ENCODE measurements at regions of chr1 and their contacts with region 1.

Region 1: DNA sequence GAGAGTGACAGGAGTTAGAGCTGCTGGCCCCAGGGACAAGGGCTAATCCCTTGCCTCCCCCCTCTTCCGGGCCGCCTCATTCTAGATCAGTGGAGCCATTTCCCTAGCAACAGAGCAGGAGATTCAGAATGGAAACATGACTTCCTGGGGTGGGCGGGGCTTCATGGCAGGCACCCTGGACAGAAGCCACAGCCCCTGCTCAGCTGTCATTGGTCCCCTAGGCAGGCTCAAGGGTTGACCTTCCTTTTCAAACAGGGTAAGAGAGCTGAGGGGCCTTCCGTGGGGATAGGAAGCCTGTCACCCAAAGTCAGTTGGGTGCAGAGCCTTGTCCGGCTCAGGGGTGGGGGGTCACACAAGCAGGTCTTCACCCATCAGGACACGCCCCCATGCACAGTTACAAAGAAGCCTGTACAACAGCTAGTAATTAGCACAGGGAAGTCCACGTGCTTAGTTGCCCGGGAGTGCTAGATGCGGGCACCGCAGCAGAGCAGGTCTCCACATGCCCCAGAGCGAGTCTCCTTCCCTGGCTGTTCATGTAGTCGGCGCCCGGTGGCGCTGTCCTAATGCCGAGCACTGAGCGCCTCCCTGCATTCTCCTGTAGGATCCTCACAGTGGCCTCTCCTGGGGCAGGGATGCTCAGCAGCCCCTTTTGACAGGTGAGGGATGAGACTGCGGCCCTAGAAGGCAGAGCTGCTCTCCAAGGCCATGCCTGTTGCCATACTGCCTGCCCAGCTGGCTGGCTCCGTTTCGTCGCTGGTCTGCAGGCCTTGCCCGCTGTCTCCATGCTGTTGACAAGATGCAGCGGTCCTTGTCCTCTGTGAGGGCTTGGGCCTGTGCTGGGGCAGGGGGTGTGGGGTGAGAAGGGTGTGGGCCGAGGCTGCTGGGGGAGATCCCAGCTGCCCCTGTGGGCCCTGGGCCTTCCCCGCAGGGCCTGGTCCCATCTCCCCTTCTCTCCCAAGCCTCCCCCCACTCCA is 5.1 kb downstream of the TMEM201 start:
- DNase-seq: peak in 1 of 2 donors; percentile 56
- ATAC-seq: no peak
- H3K4me3 ChIP-seq: peak overlapping the region in 3 of 4 donors; percentile 2 to 19 (median 13)
- H3K27ac ChIP-seq: peak overlapping the region; percentile 77 to 84 (median 82)
- H3K4me1 ChIP-seq: peaks cover 73 to 76% of the 10 kb centered on the region in 2 donors
- H3K27me3 ChIP-seq: no peaks in the 10 kb centered on the region
- CTCF ChIP-seq: no peak
- POLR2A ChIP-seq: no peak

Region 2: GRCh38 chr1:9615316-9616063 is 21.7 kb after region 1 on chr1:
- in situ Hi-C with region 1: no loop called
- intact Hi-C with region 1: no loop called
- DNase-seq: no peak
- ATAC-seq: peak in 1 of 2 donors; percentile 45
- H3K4me3 ChIP-seq: no peak overlapping the region
- H3K27ac ChIP-seq: no peak overlapping the region
- H3K4me1 ChIP-seq: no peaks in the 10 kb centered on the region
- H3K27me3 ChIP-seq: peaks cover 5 to 16% (median 7%) of the 10 kb centered on the region in 3 donors
- CTCF ChIP-seq: peak in 3 of 5 experiments; percentile 24 to 57 (median 37)
- POLR2A ChIP-seq: no peak

Region 3: GRCh38 chr1:9671377-9672140 is 77.8 kb after region 1 on chr1:
- in situ Hi-C with region 1: no loop called
- intact Hi-C with region 1: no loop called
- DNase-seq: no peak
- ATAC-seq: no peak
- H3K4me3 ChIP-seq: no peak overlapping the region
- H3K27ac ChIP-seq: no peak overlapping the region
- H3K4me1 ChIP-seq: no peaks in the 10 kb centered on the region
- H3K27me3 ChIP-seq: peaks cover 0 to 6% (median 0%) of the 10 kb centered on the region in 3 donors
- CTCF ChIP-seq: no peak
- POLR2A ChIP-seq: no peak

Region 4: DNA sequence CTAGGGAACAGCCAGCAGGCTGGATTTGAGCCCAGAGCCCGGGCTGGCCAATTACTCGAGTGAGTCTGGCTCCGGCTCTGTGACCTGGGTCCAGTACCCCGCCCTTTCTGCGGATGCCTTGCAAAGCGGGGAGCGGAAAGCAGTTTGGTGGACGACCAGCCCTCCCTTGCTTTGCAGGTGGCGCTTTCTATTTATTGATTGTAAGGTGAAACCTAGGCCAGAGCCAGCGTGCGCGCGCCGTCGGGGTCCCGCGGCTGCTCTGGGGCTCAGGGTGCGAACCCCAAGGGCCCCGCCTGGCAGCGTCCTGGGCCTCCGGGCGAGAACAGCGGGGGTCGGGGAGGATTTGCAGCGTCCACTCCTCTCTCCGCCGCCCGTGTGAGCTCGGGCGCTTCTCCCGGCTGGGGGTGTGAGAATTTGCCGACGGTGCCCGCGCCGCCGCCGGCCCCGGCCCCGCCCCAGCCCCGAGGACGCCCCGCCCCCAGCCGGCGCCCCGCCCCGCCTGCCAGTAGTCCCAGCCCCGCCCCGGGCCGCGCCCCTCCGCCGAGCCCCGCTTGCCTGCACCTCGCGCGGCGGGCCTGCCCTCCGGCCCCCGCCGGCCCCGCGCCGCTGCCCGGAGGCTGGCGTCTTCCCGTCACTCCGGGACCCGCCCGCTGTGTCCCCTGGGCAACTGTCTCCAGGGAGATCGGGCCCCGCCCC is 95.4 kb after region 1 on chr1:
- in situ Hi-C with region 1: no loop called
- intact Hi-C with region 1: loop called (anchors 1 kb)
- DNase-seq: peak; percentile 46 to 49
- ATAC-seq: peak; percentile 80 to 84
- H3K4me3 ChIP-seq: peak overlapping the region; percentile 46 to 89 (median 65)
- H3K27ac ChIP-seq: no peak overlapping the region
- H3K4me1 ChIP-seq: peaks cover 18 to 20% of the 10 kb centered on the region in 2 donors
- H3K27me3 ChIP-seq: peaks cover 21 to 24% (median 21%) of the 10 kb centered on the region in 3 donors
- CTCF ChIP-seq: no peak
- POLR2A ChIP-seq: no peak